Activated T-helper 1 cell treated with anti-CD3 and anti-CD28 coated beads, Interleukin-12 subunit alpha, Interleukin-12 subunit beta, Interleukin-2, Interleukin-4 antibody, amounts not matched to agents 30 ng/mL and 10 ng/mL and 1 ng/mL, durations not matched to agents 14 hours and 24 hours and 36 hours (primary cell): ENCODE measurements at regions of chr3 and their contacts with region 1.

Region 1: DNA sequence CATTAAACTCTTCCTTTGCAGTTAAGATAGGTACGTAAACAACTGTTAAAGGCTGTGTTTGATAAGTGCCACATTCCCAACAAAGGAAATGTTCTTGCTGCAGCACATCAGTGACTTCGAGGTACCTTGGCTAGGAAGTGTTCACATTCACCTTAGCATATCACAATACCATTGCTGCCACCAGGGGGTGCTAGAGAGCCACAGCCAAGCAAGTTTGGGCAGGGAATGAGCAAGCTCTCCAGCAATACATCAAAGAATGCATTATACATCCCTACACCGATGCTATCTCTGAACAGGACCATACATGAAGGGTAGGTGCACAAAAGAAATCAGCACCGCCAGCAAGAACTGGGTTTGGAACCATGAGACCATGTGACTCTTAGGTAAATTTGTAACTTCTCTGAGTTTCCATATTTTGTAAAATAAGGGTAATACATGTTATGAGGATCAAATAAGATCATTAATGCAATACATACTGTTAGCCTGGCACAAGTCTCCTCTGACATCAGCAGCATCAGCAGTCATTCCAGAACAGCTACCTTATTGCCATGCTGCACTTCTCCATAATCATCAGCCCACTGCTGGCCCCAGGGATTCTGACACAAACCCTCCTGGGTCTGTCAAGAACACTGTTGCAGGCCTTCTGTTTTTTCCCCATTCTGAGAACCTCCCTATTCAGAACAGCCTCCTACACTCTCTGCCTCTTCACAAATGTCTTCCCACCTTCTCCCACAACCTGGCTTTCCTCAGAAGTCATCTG is 37.6 kb downstream of the RYK start:
- DNase-seq: peak; percentile 61
- H3K4me3 Mint-ChIP-seq: no peak overlapping the region
- H3K27ac Mint-ChIP-seq: no peak overlapping the region
- H3K4me1 Mint-ChIP-seq: peaks cover 18% of the 10 kb centered on the region
- H3K27me3 Mint-ChIP-seq: peaks cover 6% of the 10 kb centered on the region

Region 2: DNA sequence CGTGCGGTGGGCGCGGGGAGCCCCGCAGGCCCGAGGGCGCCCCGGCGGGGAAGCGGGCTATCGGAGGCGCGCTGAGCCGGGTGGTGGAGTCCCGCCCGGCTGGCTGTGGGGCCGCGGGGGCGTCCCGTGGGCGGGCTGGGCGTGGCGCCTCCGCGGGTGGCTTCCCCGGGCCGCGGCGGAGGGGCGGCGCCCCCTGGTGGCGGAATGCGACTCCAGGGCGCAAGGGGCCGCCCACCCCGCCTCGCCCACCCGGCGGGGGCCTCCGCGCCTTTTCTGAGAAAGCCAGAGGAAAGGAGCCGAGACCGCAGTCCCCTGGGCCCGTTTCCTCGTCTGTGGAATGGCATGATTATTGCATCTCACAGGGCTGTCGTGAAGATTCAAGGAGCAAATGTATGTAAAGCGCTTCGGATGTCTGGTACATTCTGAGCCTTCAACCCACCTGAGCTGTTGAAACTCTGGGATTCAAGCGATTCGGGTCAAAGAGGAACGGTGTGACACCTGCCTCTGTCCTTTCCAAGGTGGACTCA is 285.5 kb before region 1 on chr3:
- intact Hi-C with region 1: loop called (anchors 10 kb)
- DNase-seq: peak; percentile 61
- H3K4me3 Mint-ChIP-seq: peak overlapping the region; percentile 46
- H3K27ac Mint-ChIP-seq: no peak overlapping the region
- H3K4me1 Mint-ChIP-seq: peaks cover 5% of the 10 kb centered on the region
- H3K27me3 Mint-ChIP-seq: peaks cover 30% of the 10 kb centered on the region

Region 3: DNA sequence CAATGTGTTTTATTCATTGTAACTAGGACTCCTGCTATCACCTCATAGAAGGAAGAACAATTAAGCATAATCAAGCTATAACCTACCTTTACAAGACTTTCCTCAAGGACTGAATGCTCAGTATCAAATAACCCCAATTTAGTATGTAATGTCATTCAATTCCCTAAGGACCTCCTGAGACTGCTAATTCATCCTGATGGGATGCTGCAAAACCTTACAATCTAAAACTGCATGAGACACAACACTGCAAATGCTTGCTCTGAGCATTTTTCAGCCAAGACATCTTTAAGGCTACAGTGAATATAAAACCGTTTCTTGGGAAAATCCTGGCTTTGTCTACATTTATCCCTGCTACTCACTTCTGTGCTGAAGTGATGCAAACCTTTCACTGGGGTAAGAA is 32.3 kb before region 1 on chr3:
- intact Hi-C with region 1: no loop called
- DNase-seq: no peak
- H3K4me3 Mint-ChIP-seq: no peak overlapping the region
- H3K27ac Mint-ChIP-seq: no peak overlapping the region
- H3K4me1 Mint-ChIP-seq: no peaks in the 10 kb centered on the region
- H3K27me3 Mint-ChIP-seq: no peaks in the 10 kb centered on the region

Region 4: DNA sequence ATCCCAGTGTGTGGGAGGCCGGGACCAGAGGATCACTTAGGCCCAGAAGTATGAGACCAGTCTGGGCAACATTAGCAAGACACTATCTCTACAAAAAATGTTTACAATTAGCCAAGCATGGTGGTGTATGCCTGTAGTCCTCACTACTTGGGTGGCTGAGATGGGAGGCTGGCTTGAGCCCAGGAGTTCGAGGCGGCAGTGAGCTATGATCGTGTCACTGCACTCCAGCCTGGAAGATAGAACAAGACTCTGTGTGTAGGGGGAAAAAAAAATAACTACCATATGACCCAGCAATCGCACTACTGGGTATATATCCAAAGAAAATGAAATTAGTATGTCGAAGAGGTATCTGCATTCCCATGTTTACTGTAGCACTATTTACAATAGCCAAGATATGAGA is 14.9 kb after region 1 on chr3:
- intact Hi-C with region 1: loop called (anchors 1 kb)
- DNase-seq: no peak
- H3K4me3 Mint-ChIP-seq: no peak overlapping the region
- H3K27ac Mint-ChIP-seq: no peak overlapping the region
- H3K4me1 Mint-ChIP-seq: peaks cover 8% of the 10 kb centered on the region
- H3K27me3 Mint-ChIP-seq: peaks cover 12% of the 10 kb centered on the region

Region 5: GRCh38 chr3:134250717-134251220 is 37.7 kb after region 1 on chr3 and contains the start of gene RYK:
- intact Hi-C with region 1: loop called (anchors 5 kb)
- DNase-seq: peak; percentile 66
- H3K4me3 Mint-ChIP-seq: peak within 1 kb of the TSS; percentile 88
- H3K27ac Mint-ChIP-seq: peak within 1 kb of the TSS; percentile 89
- H3K4me1 Mint-ChIP-seq: peaks cover 35% of the 10 kb centered on the region
- H3K27me3 Mint-ChIP-seq: peaks cover 35% of the 10 kb centered on the region
- total RNA-seq, gene RYK: 15.8 and 16.8 TPM in 2 replicates

Region 6: GRCh38 chr3:134378384-134378783 is 165.3 kb after region 1 on chr3:
- intact Hi-C with region 1: loop called (anchors 2 kb)
- DNase-seq: no peak
- H3K4me3 Mint-ChIP-seq: no peak overlapping the region
- H3K27ac Mint-ChIP-seq: no peak overlapping the region
- H3K4me1 Mint-ChIP-seq: peaks cover 13% of the 10 kb centered on the region
- H3K27me3 Mint-ChIP-seq: peaks cover 44% of the 10 kb centered on the region

Region 7: GRCh38 chr3:134663721-134664456 is 450.8 kb after region 1 on chr3:
- intact Hi-C with region 1: no loop called
- DNase-seq: no peak
- H3K4me3 Mint-ChIP-seq: no peak overlapping the region
- H3K27ac Mint-ChIP-seq: no peak overlapping the region
- H3K4me1 Mint-ChIP-seq: no peaks in the 10 kb centered on the region
- H3K27me3 Mint-ChIP-seq: no peaks in the 10 kb centered on the region